B cell (primary cell): ENCODE measurements at regions of chr7 and their contacts with region 1.

Region 1: GRCh38 chr7:87416682-87417587 is 58.5 kb downstream of the ABCB4 start:
- DNase-seq: peak; percentile 76
- ATAC-seq: peak; percentile 64
- H3K4me3 ChIP-seq: no peak overlapping the region
- H3K4me3 Mint-ChIP-seq: no peak overlapping the region
- H3K27ac ChIP-seq: no peak overlapping the region
- H3K27ac Mint-ChIP-seq: no peak overlapping the region
- H3K4me1 ChIP-seq: peaks cover 7 to 11% of the 10 kb centered on the region in 2 donors
- H3K4me1 Mint-ChIP-seq: peaks cover 18% of the 10 kb centered on the region
- H3K27me3 ChIP-seq: no peaks in the 10 kb centered on the region
- H3K27me3 Mint-ChIP-seq: no peaks in the 10 kb centered on the region
- CTCF ChIP-seq: peak; percentile 87

Region 2: DNA sequence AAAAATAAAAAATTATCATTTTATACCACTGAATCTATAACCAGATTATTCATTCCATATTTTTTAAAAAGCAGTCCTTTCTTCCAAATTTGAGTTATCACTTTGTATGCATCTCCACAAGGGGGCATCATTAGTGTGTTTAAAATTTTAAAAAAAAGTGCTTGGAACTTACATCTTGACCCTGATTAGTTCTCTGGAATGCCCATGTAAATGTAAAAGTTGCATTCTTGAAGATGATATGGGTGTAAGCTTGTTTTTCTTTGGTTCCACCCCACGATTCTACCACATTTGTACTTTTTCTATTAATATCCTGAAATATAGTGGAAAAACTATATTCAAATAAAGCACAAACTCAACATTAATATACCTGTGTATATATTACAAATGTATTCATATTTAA is 502.4 kb before region 1 on chr7:
- CTCF ChIA-PET with region 1: interaction called, 6 read pairs
- POLR2A ChIA-PET with region 1: no interaction called
- intact Hi-C with region 1: loop called (anchors 2 kb)
- DNase-seq: peak; percentile 17
- ATAC-seq: no peak
- H3K4me3 ChIP-seq: no peak overlapping the region
- H3K4me3 Mint-ChIP-seq: no peak overlapping the region
- H3K27ac ChIP-seq: no peak overlapping the region
- H3K27ac Mint-ChIP-seq: no peak overlapping the region
- H3K4me1 ChIP-seq: no peaks in the 10 kb centered on the region
- H3K4me1 Mint-ChIP-seq: no peaks in the 10 kb centered on the region
- H3K27me3 ChIP-seq: no peaks in the 10 kb centered on the region
- H3K27me3 Mint-ChIP-seq: no peaks in the 10 kb centered on the region
- CTCF ChIP-seq: peak; percentile 74

Region 3: DNA sequence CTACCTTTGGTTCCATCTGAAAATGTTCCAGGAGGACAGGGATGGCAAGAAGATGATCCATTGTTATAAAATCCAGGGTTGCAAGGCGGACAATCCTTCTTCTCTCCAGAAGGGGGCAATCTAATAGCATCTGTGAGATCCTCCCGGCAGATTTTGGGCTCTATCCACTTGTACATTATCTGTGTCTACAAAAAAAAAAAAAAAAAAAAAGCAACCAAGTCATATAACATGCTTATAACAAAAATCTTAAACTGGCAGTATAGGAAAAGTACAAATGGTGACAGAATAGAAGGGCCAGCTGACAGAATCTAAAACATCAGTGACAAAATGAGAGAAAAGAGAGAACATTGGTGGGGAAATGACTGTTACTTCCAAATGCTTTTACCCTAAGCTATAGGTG is 490.2 kb before region 1 on chr7:
- CTCF ChIA-PET with region 1: interaction called, 15 read pairs
- POLR2A ChIA-PET with region 1: no interaction called
- intact Hi-C with region 1: loop called (anchors 2 kb)
- DNase-seq: peak; percentile 56
- ATAC-seq: peak; percentile 41
- H3K4me3 ChIP-seq: no peak overlapping the region
- H3K4me3 Mint-ChIP-seq: no peak overlapping the region
- H3K27ac ChIP-seq: no peak overlapping the region
- H3K27ac Mint-ChIP-seq: no peak overlapping the region
- H3K4me1 ChIP-seq: peaks cover 4 to 6% of the 10 kb centered on the region in 2 donors
- H3K4me1 Mint-ChIP-seq: peaks cover 8% of the 10 kb centered on the region
- H3K27me3 ChIP-seq: no peaks in the 10 kb centered on the region
- H3K27me3 Mint-ChIP-seq: no peaks in the 10 kb centered on the region
- CTCF ChIP-seq: peak; percentile 81

Region 4: GRCh38 chr7:87312215-87312865 is 104.6 kb before region 1 on chr7:
- CTCF ChIA-PET with region 1: interaction called, 230 read pairs
- POLR2A ChIA-PET with region 1: no interaction called
- intact Hi-C with region 1: loop called (anchors 1 kb)
- DNase-seq: peak; percentile 70
- ATAC-seq: peak; percentile 97
- H3K4me3 ChIP-seq: no peak overlapping the region
- H3K4me3 Mint-ChIP-seq: no peak overlapping the region
- H3K27ac ChIP-seq: no peak overlapping the region
- H3K27ac Mint-ChIP-seq: no peak overlapping the region
- H3K4me1 ChIP-seq: no peaks in the 10 kb centered on the region
- H3K4me1 Mint-ChIP-seq: no peaks in the 10 kb centered on the region
- H3K27me3 ChIP-seq: no peaks in the 10 kb centered on the region
- H3K27me3 Mint-ChIP-seq: no peaks in the 10 kb centered on the region
- CTCF ChIP-seq: peak; percentile 99

Region 5: DNA sequence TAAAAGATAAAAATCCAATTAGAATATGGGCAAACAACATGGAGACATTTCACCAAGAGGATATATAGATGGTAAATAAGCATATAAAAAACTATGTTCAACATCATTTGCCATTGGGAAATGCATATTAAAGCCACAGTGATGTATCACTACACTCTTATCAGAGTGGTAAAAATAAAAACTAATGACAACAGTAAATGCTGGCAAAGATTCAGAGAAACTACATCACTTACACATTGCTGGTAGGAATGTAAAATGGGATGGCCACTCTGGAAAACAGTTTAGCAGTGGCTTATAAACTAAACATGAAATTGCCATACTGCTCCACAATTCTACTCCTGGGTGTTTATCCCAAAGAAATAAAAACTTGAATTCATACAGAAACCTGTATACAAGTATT is 12.3 kb before region 1 on chr7:
- CTCF ChIA-PET with region 1: interaction called, 16 read pairs
- POLR2A ChIA-PET with region 1: no interaction called
- intact Hi-C with region 1: no loop called
- DNase-seq: no peak
- ATAC-seq: no peak
- H3K4me3 ChIP-seq: no peak overlapping the region
- H3K4me3 Mint-ChIP-seq: no peak overlapping the region
- H3K27ac ChIP-seq: no peak overlapping the region
- H3K27ac Mint-ChIP-seq: no peak overlapping the region
- H3K4me1 ChIP-seq: no peaks in the 10 kb centered on the region
- H3K4me1 Mint-ChIP-seq: no peaks in the 10 kb centered on the region
- H3K27me3 ChIP-seq: no peaks in the 10 kb centered on the region
- H3K27me3 Mint-ChIP-seq: no peaks in the 10 kb centered on the region
- CTCF ChIP-seq: no peak

Region 6: GRCh38 chr7:87445897-87446296 is 29.0 kb after region 1 on chr7:
- CTCF ChIA-PET with region 1: interaction called, 13 read pairs
- POLR2A ChIA-PET with region 1: no interaction called
- intact Hi-C with region 1: no loop called
- DNase-seq: peak; percentile 52
- ATAC-seq: peak; percentile 31
- H3K4me3 ChIP-seq: no peak overlapping the region
- H3K4me3 Mint-ChIP-seq: no peak overlapping the region
- H3K27ac ChIP-seq: peak overlapping the region in 1 of 2 donors; percentile 37
- H3K27ac Mint-ChIP-seq: peak overlapping the region; percentile 77
- H3K4me1 ChIP-seq: peaks cover 5% of the 10 kb centered on the region in 2 donors
- H3K4me1 Mint-ChIP-seq: peaks cover 11% of the 10 kb centered on the region
- H3K27me3 ChIP-seq: no peaks in the 10 kb centered on the region
- H3K27me3 Mint-ChIP-seq: no peaks in the 10 kb centered on the region
- CTCF ChIP-seq: no peak